Activated CD4-positive, alpha-beta T cell treated with anti-CD3 and anti-CD28 coated beads for 36 hours (primary cell): ENCODE measurements at regions of chr2 and their contacts with region 1.

Region 1: GRCh38 chr2:241443486-241444223 is 64.7 kb downstream of the STK25 start:
- DNase-seq: peak; percentile 95
- ATAC-seq: peak; percentile 86
- H3K4me3 Mint-ChIP-seq: peak overlapping the region; percentile 48
- H3K27ac Mint-ChIP-seq: peak overlapping the region; percentile 45
- H3K4me1 Mint-ChIP-seq: peaks cover 27% of the 10 kb centered on the region
- H3K27me3 Mint-ChIP-seq: peaks cover 37% of the 10 kb centered on the region

Region 2: DNA sequence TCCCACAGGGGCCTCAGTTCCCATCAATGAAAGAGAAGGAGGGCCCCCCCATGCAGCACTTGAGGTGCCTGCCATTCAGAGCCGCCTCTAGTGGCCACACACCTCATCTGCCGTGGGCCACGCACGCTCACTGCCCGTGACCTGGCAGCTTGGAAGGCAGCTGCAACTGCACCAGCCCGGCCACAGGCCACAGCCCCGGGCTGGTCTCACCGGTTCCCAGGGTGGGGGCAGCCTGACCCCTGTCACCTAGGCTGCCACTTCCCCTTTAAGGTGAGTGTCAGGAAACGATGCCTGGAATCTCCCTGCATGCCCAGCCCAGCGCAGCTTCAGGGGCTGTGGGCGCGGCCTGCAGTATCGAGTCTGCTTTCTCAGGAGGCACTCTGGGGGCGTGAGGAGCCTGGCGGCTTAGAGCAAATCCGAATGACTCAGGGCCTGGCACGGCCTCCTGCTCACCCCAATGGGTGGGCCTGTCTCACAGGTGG is 550.3 kb before region 1 on chr2:
- CTCF ChIA-PET with region 1: no interaction called
- POLR2A ChIA-PET with region 1: no interaction called
- intact Hi-C with region 1: no loop called
- DNase-seq: peak; percentile 24
- ATAC-seq: peak; percentile 26
- H3K4me3 Mint-ChIP-seq: no peak overlapping the region
- H3K27ac Mint-ChIP-seq: no peak overlapping the region
- H3K4me1 Mint-ChIP-seq: no peaks in the 10 kb centered on the region
- H3K27me3 Mint-ChIP-seq: no peaks in the 10 kb centered on the region

Region 3: GRCh38 chr2:241324775-241325174 is 118.9 kb before region 1 on chr2:
- CTCF ChIA-PET with region 1: no interaction called
- POLR2A ChIA-PET with region 1: no interaction called
- intact Hi-C with region 1: no loop called
- DNase-seq: no peak
- ATAC-seq: no peak
- H3K4me3 Mint-ChIP-seq: no peak overlapping the region
- H3K27ac Mint-ChIP-seq: no peak overlapping the region
- H3K4me1 Mint-ChIP-seq: peaks cover 40% of the 10 kb centered on the region
- H3K27me3 Mint-ChIP-seq: no peaks in the 10 kb centered on the region

Region 4: GRCh38 chr2:241366678-241367077 is 77.0 kb before region 1 on chr2:
- CTCF ChIA-PET with region 1: no interaction called
- POLR2A ChIA-PET with region 1: no interaction called
- intact Hi-C with region 1: no loop called
- DNase-seq: no peak
- ATAC-seq: no peak
- H3K4me3 Mint-ChIP-seq: no peak overlapping the region
- H3K27ac Mint-ChIP-seq: no peak overlapping the region
- H3K4me1 Mint-ChIP-seq: peaks cover 4% of the 10 kb centered on the region
- H3K27me3 Mint-ChIP-seq: no peaks in the 10 kb centered on the region

Region 5: DNA sequence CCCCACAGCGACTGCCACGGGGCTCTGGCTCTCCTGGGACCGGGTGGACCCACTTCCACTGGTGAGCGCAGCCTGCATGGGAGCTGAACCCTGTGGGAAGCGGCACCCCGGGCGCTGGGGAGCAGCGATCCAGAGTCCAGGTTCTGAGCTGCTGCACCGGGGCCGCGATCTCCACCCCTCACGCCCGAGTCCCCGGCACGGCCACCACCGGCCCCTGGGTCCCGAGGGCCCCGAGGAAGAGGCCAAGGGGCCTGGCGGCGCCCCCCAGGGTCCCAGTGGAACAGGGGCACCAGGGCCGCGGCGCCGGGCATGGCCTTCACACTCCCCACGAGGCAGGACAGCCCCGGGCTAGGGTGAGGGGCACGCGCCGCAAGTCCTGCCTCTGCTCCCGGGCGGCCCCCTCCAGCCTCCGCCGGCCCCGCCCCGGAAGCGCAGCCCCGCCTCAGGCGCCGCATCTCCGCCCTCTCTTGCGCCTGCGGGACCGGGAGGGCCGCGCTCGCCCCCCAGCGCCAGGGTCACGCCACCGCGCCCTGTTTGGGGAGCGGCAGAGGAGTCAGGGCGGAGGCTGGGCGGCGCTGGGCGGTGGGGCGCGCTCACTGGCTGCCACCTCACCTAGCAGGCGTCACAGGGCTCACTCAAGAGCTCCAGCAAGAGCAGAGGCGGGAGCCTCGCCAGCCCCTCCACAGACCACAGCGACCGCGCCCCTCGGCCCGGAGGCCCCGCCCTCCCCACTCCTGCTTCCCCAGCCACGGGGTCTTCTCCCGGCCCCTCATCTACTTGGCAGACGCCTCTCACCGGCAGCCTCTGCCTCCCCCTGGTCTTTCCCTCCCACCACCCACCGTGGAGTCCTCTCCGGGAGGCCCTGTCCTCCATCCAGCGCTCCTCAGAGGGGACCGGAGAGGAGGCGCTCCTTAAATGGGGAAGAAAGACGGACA is 166.5 kb after region 1 on chr2:
- CTCF ChIA-PET with region 1: no interaction called
- POLR2A ChIA-PET with region 1: no interaction called
- intact Hi-C with region 1: loop called in 1 of 2 experiments (anchors 10 kb)
- DNase-seq: peak; percentile 96
- ATAC-seq: peak; percentile 100
- H3K4me3 Mint-ChIP-seq: peak overlapping the region; percentile 48
- H3K27ac Mint-ChIP-seq: peak overlapping the region; percentile 67
- H3K4me1 Mint-ChIP-seq: peaks cover 14% of the 10 kb centered on the region
- H3K27me3 Mint-ChIP-seq: no peaks in the 10 kb centered on the region